ENCODE measurements at regions of chr7 and their contacts with region 1.

Region 1: DNA sequence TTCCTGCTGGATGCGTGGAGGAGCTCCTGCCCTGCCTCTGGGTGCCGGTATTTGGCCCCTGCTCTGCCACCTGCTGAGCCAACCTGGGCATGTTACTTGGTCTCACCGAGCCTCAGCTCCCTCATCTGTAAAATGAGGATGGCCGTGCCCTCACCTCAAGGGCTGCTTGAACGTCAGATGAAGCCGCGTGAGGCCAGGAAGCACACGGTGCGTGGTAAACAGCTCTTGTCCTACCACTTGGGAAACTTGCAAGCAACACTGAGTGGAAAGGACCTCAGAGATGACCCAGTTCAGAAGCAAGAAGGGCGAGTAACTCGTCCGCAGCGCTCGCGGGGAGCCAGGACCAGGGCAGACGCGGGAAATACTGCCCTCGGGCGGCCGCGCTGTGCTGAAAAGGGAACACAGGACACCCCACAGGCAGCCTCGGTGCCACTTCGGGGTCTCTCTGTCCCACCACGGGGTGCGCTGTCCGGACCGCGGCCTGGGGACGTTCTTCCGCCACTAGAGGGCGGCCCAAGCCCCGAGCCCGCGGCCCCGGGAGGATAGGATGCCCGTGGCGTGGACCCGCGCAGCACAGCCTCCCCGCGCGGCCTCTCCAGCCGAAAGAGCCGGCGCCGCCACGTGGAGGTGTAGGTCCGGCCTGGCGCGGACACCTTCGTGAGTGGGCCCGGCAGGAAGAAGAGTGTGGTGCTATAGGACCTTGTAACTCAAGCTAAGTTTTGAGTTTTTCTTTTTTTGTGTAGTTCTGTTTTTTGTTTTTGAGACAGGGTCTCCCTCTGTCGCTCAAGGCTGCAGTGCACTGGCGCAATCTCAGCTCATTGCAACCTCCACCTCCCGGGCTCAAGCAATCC is 94.1 kb downstream of the PRKAG2 start:
- DNase-seq: peak; percentile 65 to 81
- H3K4me3 ChIP-seq: peak overlapping the region; percentile 49
- H3K27ac ChIP-seq: no peak overlapping the region
- H3K4me1 ChIP-seq: peaks cover 5% of the 10 kb centered on the region; the same call in 1 of the 2 replicates
- H3K27me3 ChIP-seq: peaks cover 11% of the 10 kb centered on the region; the same call in 1 of the 2 replicates
- CTCF ChIP-seq: peak; percentile 95

Region 2: GRCh38 chr7:151808400-151809183 is 25.8 kb after region 1 on chr7:
- CTCF ChIA-PET with region 1: interaction called, 10 read pairs
- POLR2A ChIA-PET with region 1: no interaction called
- intact Hi-C with region 1: no loop called
- DNase-seq: peak; percentile 76 to 83
- H3K4me3 ChIP-seq: no peak overlapping the region
- H3K27ac ChIP-seq: no peak overlapping the region
- H3K4me1 ChIP-seq: peaks cover 10% of the 10 kb centered on the region
- H3K27me3 ChIP-seq: peaks cover 6% of the 10 kb centered on the region; the same call in 1 of the 2 replicates
- CTCF ChIP-seq: no peak

Region 3: DNA sequence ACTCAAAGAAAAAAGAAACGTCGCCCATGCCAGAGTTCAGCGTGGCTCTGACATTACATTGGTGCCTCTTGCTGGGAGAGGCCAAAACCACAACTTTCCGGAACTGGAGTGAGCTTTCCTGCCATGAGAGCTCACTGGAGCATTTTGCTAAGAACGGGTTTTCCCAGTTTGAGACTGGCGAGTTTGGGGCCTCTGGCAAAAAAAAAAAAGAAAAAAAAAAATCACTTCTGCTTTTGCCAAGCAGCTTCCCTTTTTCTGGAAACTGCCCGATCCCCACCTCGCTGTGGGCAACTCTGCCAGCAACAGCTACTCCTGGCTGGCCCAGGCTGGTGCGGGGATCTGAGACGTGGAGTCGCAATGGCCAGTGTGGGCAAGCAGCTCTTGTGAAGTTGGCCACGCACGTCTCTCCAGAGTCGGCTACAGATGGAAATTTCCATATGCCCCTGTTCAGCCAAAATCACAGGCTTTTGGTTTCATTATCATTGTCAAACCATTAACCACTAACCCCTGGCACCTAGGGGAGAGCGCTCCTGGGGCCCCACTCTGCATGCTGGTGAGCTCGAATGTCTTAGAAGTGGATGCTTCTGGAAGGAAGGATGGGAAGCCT is 68.4 kb after region 1 on chr7:
- CTCF ChIA-PET with region 1: interaction called, 3 read pairs
- POLR2A ChIA-PET with region 1: no interaction called
- intact Hi-C with region 1: loop called (anchors 2 kb)
- DNase-seq: peak; percentile 77 to 89
- H3K4me3 ChIP-seq: peak overlapping the region; percentile 38; the same call in 1 of the 2 replicates
- H3K27ac ChIP-seq: peak overlapping the region; percentile 30
- H3K4me1 ChIP-seq: peaks cover 17% of the 10 kb centered on the region
- H3K27me3 ChIP-seq: peaks cover 2% of the 10 kb centered on the region; the same call in 1 of the 2 replicates
- CTCF ChIP-seq: no peak

Region 4: DNA sequence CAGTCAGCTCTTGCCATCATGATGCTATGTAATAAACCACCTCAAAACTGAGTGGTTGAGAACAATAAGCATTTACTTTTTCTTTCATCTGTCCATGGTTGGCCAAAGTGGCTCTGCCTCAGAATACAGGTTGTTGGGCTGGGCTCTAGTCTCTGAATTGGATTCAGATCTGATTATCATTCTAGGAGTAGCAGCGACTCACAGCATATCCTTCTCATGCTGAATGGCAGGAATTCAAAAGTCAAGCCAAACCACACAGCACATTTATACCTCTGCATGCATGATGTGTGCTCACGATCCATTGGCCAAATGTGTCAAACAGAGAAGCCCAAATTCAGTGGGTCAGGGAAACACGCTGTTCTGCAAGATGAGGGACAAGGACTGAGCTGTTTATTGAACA is 229.0 kb after region 1 on chr7:
- CTCF ChIA-PET with region 1: no interaction called
- POLR2A ChIA-PET with region 1: no interaction called
- intact Hi-C with region 1: loop called (anchors 10 kb)
- DNase-seq: no peak
- H3K4me3 ChIP-seq: no peak overlapping the region
- H3K27ac ChIP-seq: no peak overlapping the region
- H3K4me1 ChIP-seq: no peaks in the 10 kb centered on the region
- H3K27me3 ChIP-seq: 0 out of 2 replicates have a peak, but pooled peaks cover 7% of the 10 kb centered on the region
- CTCF ChIP-seq: no peak

Region 5: DNA sequence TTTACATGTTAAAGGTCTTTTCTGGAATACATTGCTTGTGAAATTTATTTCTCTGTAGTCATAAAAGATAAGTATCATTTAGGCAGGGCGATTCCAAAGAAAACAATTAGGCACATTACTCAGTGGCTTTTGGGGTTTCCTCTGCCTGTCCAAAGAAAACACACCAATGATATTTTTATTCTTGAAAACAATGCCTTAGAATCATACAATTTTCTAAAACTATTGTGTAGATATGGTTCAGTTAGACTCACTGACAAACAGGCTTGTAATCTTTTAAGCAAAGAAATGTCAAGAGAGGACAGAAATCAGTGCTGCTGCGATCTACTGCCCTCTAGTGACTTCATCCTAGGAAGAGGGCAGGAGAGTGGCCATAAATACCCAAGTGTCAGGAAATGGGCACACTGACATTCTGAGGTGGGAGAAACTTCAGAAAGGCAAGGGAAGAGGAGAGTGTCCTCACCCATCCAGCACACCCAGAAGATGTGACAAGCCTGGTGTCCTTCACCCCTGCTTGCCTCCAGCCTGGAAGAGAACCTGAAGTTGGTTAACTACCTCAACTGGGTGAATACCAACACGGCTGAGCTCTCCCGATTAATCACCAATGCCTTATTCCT is 363.1 kb after region 1 on chr7:
- CTCF ChIA-PET with region 1: interaction called, 4 read pairs
- POLR2A ChIA-PET with region 1: interaction called, 3 read pairs
- intact Hi-C with region 1: loop called (anchors 10 kb)
- DNase-seq: peak; percentile 41 to 50
- H3K4me3 ChIP-seq: no peak overlapping the region
- H3K27ac ChIP-seq: no peak overlapping the region
- H3K4me1 ChIP-seq: no peaks in the 10 kb centered on the region
- H3K27me3 ChIP-seq: no peaks in the 10 kb centered on the region
- CTCF ChIP-seq: peak; percentile 77